ENCODE measurements at regions of chr6 and their contacts with region 1.

Region 1: DNA sequence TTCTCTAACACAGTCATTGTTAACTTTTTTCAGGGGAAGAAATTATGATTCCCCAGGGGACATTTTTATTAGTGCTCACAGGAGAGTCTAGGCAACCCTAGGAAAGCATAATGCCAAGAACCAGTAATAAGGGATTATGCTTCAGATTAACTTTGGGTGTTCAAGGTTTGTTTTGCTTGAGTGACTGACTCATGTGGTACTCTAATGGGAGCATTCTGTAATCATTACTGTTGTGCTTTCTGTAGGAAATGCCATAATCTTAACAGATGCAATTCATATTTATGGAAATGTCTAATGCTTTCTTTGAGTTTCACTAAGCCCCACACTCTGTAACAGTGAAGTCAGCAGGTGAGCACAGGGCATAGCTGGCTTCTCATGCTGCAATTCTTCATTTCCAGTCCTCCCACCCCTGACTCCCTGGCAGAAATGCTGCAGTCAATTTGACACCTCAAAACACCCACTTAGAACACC is 263.4 kb upstream of the MAN1A1 start:
- DNase-seq: no peak
- H3K4me3 ChIP-seq: no peak overlapping the region
- H3K27ac ChIP-seq: no peak overlapping the region
- H3K4me1 ChIP-seq: no peaks in the 10 kb centered on the region
- H3K27me3 ChIP-seq: no peaks in the 10 kb centered on the region
- CTCF ChIP-seq: no peak
- POLR2A ChIP-seq: no peak

Region 2: DNA sequence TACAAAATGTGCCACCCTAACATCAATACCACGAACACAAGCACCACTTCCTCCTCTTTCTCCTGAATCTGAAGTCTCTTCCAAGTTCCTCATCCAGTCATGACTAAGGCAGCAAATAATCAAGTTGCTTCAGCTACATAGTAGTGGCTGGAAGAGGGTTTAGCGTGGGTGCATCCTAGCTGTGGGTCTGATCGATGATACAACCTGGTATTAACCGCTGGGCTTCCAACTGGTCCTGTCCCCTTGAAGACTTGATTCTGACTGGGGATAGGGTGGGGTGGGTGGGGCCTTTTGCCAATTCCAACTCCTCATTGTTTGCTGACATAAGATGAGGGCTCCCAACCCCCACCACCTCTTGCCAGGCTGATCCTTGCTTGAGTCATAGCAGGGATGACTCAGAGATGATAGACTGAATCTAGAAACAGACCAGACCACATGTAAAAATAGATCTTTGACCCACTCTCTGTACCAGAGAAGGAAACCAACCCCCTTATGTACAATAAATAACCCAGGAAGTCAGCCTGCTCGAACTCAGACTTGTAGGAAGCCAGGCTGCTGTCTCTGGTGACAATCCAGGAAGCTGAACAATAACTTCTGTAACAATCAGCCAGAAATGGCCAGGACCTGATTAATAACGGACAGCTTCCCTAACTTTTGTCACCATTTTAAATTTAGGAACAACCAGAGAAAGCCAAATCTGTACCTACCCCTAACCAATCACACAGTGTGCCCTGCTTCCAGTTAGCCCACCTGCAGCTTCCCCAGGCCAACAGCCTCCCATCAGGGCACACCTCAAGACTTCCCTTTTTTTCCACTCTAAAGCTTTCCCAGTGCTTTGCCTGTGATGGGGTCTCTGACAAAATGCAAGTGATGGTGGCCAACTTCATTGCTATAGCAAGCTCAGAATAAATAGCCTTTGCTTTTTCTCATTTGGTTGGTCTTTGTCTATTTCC is 465.6 kb before region 1 on chr6:
- intact Hi-C with region 1: loop called (anchors 10 kb)
- DNase-seq: no peak
- H3K4me3 ChIP-seq: no peak overlapping the region
- H3K27ac ChIP-seq: peak overlapping the region; percentile 48 to 76
- H3K4me1 ChIP-seq: no peaks in the 10 kb centered on the region
- H3K27me3 ChIP-seq: no peaks in the 10 kb centered on the region
- CTCF ChIP-seq: no peak
- POLR2A ChIP-seq: no peak